ENCODE measurements at regions of chr6 and their contacts with region 1.

Region 1: GRCh38 chr6:34248727-34249551 is at the start of gene SMIM29:
- DNase-seq: peak; percentile 93 to 95 (median 95)
- H3K4me3 ChIP-seq: peak within 1 kb of the TSS; percentile 82 to 93 (median 82)
- H3K4me3 Mint-ChIP-seq: peak within 1 kb of the TSS; percentile 95 to 97
- H3K27ac ChIP-seq: peak within 1 kb of the TSS; percentile 95 to 96
- H3K27ac Mint-ChIP-seq: peak within 1 kb of the TSS; percentile 93 to 98 (median 97)
- H3K4me1 ChIP-seq: peaks cover 33 to 41% of the 10 kb centered on the region in 2 donors
- H3K4me1 Mint-ChIP-seq: peaks cover 55% of the 10 kb centered on the region
- H3K27me3 ChIP-seq: no peaks in the 10 kb centered on the region
- H3K27me3 Mint-ChIP-seq: no peaks in the 10 kb centered on the region
- CTCF ChIP-seq: peak; percentile 89
- polyA plus RNA-seq, gene SMIM29: 57.2 to 66.7 (median 60.5) TPM

Region 2: DNA sequence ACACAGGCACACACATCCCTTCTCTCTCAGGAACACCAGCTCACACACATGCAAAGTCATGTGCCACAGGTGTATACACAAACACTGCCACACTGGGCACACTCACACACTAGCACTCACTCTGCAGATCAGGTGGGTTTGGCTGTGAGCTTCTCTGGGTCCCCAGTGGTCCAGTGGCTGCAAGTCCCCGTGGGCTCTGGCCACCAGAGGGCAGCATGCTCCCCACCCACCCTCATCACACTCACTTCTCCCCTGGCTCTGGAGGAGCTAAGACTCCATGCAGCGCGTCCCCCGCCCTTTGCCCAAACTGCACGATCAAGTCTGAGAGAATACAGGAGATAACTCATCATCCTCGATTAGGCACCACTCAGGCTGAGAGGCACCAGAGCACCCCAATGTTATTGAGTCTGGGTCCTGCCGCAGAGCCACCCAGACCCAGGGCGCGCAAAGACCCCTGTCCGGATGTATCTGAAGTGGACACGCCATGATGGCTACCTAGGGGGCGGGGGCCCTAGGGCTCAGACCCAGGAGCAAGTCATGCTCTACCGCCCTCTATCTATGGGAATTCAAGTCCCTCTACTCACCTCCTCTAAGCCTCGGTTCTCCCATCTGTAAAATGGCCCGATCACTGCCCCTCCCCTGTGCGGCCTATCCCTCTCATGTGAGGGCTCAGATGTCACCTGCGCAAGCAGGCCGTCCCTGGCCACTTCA is 193.6 kb before region 1 on chr6:
- intact Hi-C with region 1: no loop called
- DNase-seq: peak; percentile 24 to 38 (median 28)
- H3K4me3 ChIP-seq: no peak overlapping the region
- H3K4me3 Mint-ChIP-seq: no peak overlapping the region
- H3K27ac ChIP-seq: no peak overlapping the region
- H3K27ac Mint-ChIP-seq: no peak overlapping the region
- H3K4me1 ChIP-seq: no peaks in the 10 kb centered on the region
- H3K4me1 Mint-ChIP-seq: no peaks in the 10 kb centered on the region
- H3K27me3 ChIP-seq: no peaks in the 10 kb centered on the region
- H3K27me3 Mint-ChIP-seq: peaks cover 7 to 11% (median 10%) of the 10 kb centered on the region in 3 donors
- CTCF ChIP-seq: peak; percentile 82

Region 3: DNA sequence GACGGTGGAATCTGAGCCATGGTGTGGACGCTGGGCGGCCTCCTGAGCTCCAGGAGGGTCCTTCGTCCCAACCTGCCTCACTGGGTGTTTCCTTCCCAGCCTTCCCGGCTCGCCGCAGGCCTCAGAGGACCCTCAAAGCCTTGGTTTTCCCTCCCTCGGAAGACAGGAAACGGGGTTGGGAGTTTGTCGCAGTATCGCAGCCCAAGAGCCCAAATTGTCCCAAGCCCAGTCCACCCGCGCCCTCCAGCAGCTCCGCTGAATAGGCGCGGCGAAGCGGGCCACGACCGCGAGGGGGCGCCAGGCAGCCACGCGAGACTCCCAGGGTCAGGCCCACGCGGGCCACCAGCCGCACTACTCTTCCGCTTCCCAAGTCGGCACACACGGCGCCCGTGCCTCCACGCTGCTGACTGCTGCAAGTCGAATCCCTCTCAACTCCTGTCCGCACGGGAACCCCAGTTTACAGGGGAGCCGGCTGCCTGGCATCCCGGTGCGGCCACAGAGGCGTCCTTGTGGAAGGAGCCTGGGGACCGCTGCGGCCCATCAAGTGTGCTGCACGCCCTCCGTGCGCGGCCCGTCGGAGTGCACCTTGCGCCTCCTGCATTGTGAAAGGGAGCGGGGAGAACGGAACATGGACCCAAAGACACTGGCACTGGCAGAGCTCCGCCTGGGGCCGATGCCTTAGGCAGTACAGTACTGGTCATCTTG is 52.7 kb before region 1 on chr6:
- intact Hi-C with region 1: loop called (anchors 1 to 5 kb)
- DNase-seq: peak; percentile 86 to 88 (median 88)
- H3K4me3 ChIP-seq: peak overlapping the region; percentile 36 to 76 (median 47)
- H3K4me3 Mint-ChIP-seq: peak overlapping the region; percentile 85 to 93
- H3K27ac ChIP-seq: no peak overlapping the region
- H3K27ac Mint-ChIP-seq: peak overlapping the region in 3 of 7 donors; percentile 45 to 63 (median 63)
- H3K4me1 ChIP-seq: peaks cover 8 to 11% of the 10 kb centered on the region in 2 donors
- H3K4me1 Mint-ChIP-seq: peaks cover 8% of the 10 kb centered on the region
- H3K27me3 ChIP-seq: peaks cover 0 to 3% of the 10 kb centered on the region in 2 donors
- H3K27me3 Mint-ChIP-seq: peaks cover 4 to 27% (median 16%) of the 10 kb centered on the region in 3 donors
- CTCF ChIP-seq: peak; percentile 98

Region 4: GRCh38 chr6:34236131-34236996 is 12.6 kb before region 1 on chr6 and contains the start of gene HMGA1:
- intact Hi-C with region 1: loop called in 1 of 2 experiments (anchors 1 kb)
- DNase-seq: peak; percentile 86 to 93 (median 90)
- H3K4me3 ChIP-seq: peak within 1 kb of the TSS; percentile 54 to 90 (median 79)
- H3K4me3 Mint-ChIP-seq: peak within 1 kb of the TSS; percentile 84 to 87
- H3K27ac ChIP-seq: peak within 1 kb of the TSS; percentile 86 to 97
- H3K27ac Mint-ChIP-seq: peak within 1 kb of the TSS; percentile 90 to 97 (median 95)
- H3K4me1 ChIP-seq: peaks cover 16 to 32% of the 10 kb centered on the region in 2 donors
- H3K4me1 Mint-ChIP-seq: peaks cover 24% of the 10 kb centered on the region
- H3K27me3 ChIP-seq: no peaks in the 10 kb centered on the region
- H3K27me3 Mint-ChIP-seq: peaks cover 0 to 2% (median 1%) of the 10 kb centered on the region in 3 donors
- CTCF ChIP-seq: no peak
- polyA plus RNA-seq, gene HMGA1: 11.4 to 37.9 (median 17.6) TPM

Region 5: GRCh38 chr6:34301408-34301807 is 52.5 kb after region 1 on chr6:
- intact Hi-C with region 1: loop called in 1 of 2 experiments (anchors 10 kb)
- DNase-seq: no peak
- H3K4me3 ChIP-seq: no peak overlapping the region
- H3K4me3 Mint-ChIP-seq: no peak overlapping the region
- H3K27ac ChIP-seq: peak overlapping the region; percentile 1 to 88
- H3K27ac Mint-ChIP-seq: peak overlapping the region; percentile 48 to 94 (median 73)
- H3K4me1 ChIP-seq: peaks cover 17 to 19% of the 10 kb centered on the region in 2 donors
- H3K4me1 Mint-ChIP-seq: peaks cover 30% of the 10 kb centered on the region
- H3K27me3 ChIP-seq: no peaks in the 10 kb centered on the region
- H3K27me3 Mint-ChIP-seq: no peaks in the 10 kb centered on the region
- CTCF ChIP-seq: no peak

Region 6: GRCh38 chr6:34392497-34393190 is 143.7 kb after region 1 on chr6 and contains the start of gene NUDT3:
- intact Hi-C with region 1: loop called in 1 of 2 experiments (anchors 1 kb)
- DNase-seq: peak; percentile 95 to 98 (median 97)
- H3K4me3 ChIP-seq: peak within 1 kb of the TSS; percentile 77 to 93 (median 87)
- H3K4me3 Mint-ChIP-seq: peak within 1 kb of the TSS; percentile 69 to 94
- H3K27ac ChIP-seq: peak within 1 kb of the TSS; percentile 84 to 95
- H3K27ac Mint-ChIP-seq: peak within 1 kb of the TSS in 6 of 7 donors; percentile 89 to 95 (median 92)
- H3K4me1 ChIP-seq: peaks cover 30 to 42% of the 10 kb centered on the region in 2 donors
- H3K4me1 Mint-ChIP-seq: peaks cover 23% of the 10 kb centered on the region
- H3K27me3 ChIP-seq: no peaks in the 10 kb centered on the region
- H3K27me3 Mint-ChIP-seq: peaks cover 0 to 4% (median 0%) of the 10 kb centered on the region in 3 donors
- CTCF ChIP-seq: peak; percentile 87
- polyA plus RNA-seq, gene NUDT3: 9.3 to 33.3 (median 10.9) TPM

Region 7: GRCh38 chr6:34414999-34415858 is 166.3 kb after region 1 on chr6:
- intact Hi-C with region 1: loop called (anchors 2 kb)
- DNase-seq: peak; percentile 71 to 84 (median 79)
- H3K4me3 ChIP-seq: no peak overlapping the region
- H3K4me3 Mint-ChIP-seq: no peak overlapping the region
- H3K27ac ChIP-seq: peak overlapping the region in 1 of 2 donors; percentile 47
- H3K27ac Mint-ChIP-seq: peak overlapping the region in 5 of 7 donors; percentile 37 to 75 (median 61)
- H3K4me1 ChIP-seq: peaks cover 0 to 4% of the 10 kb centered on the region in 2 donors
- H3K4me1 Mint-ChIP-seq: peaks cover 7% of the 10 kb centered on the region
- H3K27me3 ChIP-seq: no peaks in the 10 kb centered on the region
- H3K27me3 Mint-ChIP-seq: no peaks in the 10 kb centered on the region
- CTCF ChIP-seq: peak; percentile 80

Region 8: GRCh38 chr6:34425498-34426410 is 176.8 kb after region 1 on chr6 and contains the start of gene RPS10:
- intact Hi-C with region 1: loop called in 1 of 2 experiments (anchors 2 kb)
- DNase-seq: peak; percentile 93 to 98 (median 96)
- H3K4me3 ChIP-seq: peak within 1 kb of the TSS; percentile 72 to 83 (median 83)
- H3K4me3 Mint-ChIP-seq: peak within 1 kb of the TSS; percentile 93
- H3K27ac ChIP-seq: peak within 1 kb of the TSS; percentile 78 to 87
- H3K27ac Mint-ChIP-seq: peak within 1 kb of the TSS; percentile 95 to 97 (median 97)
- H3K4me1 ChIP-seq: peaks cover 12% of the 10 kb centered on the region in 2 donors
- H3K4me1 Mint-ChIP-seq: peaks cover 15% of the 10 kb centered on the region
- H3K27me3 ChIP-seq: no peaks in the 10 kb centered on the region
- H3K27me3 Mint-ChIP-seq: peaks cover 0 to 5% (median 5%) of the 10 kb centered on the region in 3 donors
- CTCF ChIP-seq: no peak
- polyA plus RNA-seq, gene RPS10: 645 to 2,603 (median 1,054) TPM

Measured in CD14-positive monocyte (primary cell).